ENCODE measurements at regions of chr1 and their contacts with region 1.

Region 1: GRCh38 chr1:242467556-242468145 is 56.8 kb downstream of the PLD5 start:
- DNase-seq: peak in 1 of 2 donors; percentile 59
- ATAC-seq: peak; percentile 93
- H3K4me3 ChIP-seq: no peak overlapping the region
- H3K27ac ChIP-seq: no peak overlapping the region
- H3K4me1 ChIP-seq: peaks cover 0 to 2% of the 10 kb centered on the region in 2 donors
- H3K27me3 ChIP-seq: no peaks in the 10 kb centered on the region

Region 2: DNA sequence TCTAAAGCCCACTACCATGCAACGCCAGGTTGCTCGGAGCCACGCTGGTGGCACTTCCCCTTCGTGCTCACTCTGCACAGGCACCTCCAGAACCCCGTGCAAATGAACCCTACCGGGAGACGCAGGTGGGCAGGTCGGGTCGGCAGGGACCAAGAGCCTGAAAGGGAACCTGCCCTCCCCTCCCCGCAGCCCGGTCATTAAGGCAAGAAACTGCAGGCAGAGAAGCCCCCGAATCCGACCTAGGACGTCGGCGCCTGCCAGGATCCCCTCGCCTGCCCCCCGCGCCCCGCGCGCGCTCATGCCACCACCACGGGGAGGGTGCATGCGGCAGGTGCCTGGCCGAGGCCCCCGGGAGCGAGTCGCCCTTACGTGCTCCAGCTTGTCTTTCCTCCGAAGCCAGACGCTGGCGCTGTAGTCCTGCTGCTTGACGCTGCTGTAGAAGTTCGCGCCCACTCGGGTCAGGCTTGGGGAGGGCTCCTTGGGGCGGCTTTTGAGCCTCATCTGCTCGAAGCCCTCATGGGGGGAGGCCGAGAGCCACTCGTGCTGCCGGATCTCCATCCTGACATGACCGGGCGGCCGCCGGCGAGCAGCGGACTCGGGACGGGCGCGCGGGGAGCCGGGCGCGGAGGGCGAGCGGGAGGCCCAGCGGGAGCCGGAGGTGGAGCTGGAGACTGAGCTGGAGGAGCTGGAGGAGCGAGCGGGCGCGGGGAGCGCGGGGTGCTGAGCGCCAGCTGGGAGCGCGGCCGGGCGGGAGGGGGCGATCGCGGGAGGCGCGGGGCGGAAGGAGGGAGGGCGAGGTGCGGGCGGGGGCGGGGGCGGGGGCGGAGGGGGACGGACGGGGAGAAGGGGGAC is 56.3 kb after region 1 on chr1:
- intact Hi-C with region 1: loop called (anchors 5 to 10 kb)
- DNase-seq: peak; percentile 51 to 88
- ATAC-seq: peak; percentile 84
- H3K4me3 ChIP-seq: peak overlapping the region; percentile 72 to 74
- H3K27ac ChIP-seq: no peak overlapping the region
- H3K4me1 ChIP-seq: peaks cover 0 to 1% of the 10 kb centered on the region in 2 donors
- H3K27me3 ChIP-seq: no peaks in the 10 kb centered on the region

Region 3: GRCh38 chr1:242542271-242542670 is 74.6 kb after region 1 on chr1:
- intact Hi-C with region 1: no loop called
- DNase-seq: no peak
- ATAC-seq: no peak
- H3K4me3 ChIP-seq: no peak overlapping the region
- H3K27ac ChIP-seq: no peak overlapping the region
- H3K4me1 ChIP-seq: no peaks in the 10 kb centered on the region
- H3K27me3 ChIP-seq: no peaks in the 10 kb centered on the region

Region 4: DNA sequence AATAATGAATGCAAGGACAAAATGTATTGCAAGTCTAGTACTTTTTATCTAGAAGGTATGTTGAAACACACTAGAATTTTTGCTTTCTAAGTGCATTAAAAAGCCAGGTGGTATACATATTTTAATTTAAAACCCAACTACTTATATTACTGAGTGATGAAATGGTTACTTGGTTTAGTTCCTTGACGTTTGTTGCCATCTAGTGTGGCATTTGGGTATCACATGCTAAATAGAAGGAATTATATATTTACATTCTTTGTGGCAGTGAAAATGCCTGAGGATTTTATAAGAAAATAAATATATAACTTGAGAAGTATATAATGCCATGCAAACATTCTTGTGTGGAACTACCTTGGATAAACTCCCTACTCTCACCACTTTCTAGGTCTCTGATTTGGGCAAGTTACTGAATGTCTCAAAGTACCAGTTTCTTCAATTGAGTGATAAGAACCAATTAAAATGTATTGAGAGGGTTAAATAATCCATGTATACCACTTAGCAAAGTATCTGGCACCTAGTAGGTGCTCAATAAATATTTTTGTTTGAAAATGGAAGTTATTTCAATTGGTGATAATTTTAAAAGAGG is 857.7 kb after region 1 on chr1:
- intact Hi-C with region 1: loop called (anchors 5 to 10 kb)
- DNase-seq: no peak
- ATAC-seq: no peak
- H3K4me3 ChIP-seq: no peak overlapping the region
- H3K27ac ChIP-seq: no peak overlapping the region
- H3K4me1 ChIP-seq: no peaks in the 10 kb centered on the region
- H3K27me3 ChIP-seq: no peaks in the 10 kb centered on the region